Activated CD4-positive, alpha-beta T cell treated with anti-CD3 and anti-CD28 coated beads for 36 hours (primary cell): ENCODE measurements at regions of chr5 and their contacts with region 1.

Region 1: GRCh38 chr5:88666761-88667495 is 216.1 kb downstream of the MEF2C start:
- DNase-seq: peak; percentile 12
- ATAC-seq: peak; percentile 36
- H3K4me3 Mint-ChIP-seq: peak overlapping the region; percentile 64
- H3K27ac Mint-ChIP-seq: no peak overlapping the region
- H3K4me1 Mint-ChIP-seq: peaks cover 27% of the 10 kb centered on the region
- H3K27me3 Mint-ChIP-seq: peaks cover 74% of the 10 kb centered on the region

Region 2: DNA sequence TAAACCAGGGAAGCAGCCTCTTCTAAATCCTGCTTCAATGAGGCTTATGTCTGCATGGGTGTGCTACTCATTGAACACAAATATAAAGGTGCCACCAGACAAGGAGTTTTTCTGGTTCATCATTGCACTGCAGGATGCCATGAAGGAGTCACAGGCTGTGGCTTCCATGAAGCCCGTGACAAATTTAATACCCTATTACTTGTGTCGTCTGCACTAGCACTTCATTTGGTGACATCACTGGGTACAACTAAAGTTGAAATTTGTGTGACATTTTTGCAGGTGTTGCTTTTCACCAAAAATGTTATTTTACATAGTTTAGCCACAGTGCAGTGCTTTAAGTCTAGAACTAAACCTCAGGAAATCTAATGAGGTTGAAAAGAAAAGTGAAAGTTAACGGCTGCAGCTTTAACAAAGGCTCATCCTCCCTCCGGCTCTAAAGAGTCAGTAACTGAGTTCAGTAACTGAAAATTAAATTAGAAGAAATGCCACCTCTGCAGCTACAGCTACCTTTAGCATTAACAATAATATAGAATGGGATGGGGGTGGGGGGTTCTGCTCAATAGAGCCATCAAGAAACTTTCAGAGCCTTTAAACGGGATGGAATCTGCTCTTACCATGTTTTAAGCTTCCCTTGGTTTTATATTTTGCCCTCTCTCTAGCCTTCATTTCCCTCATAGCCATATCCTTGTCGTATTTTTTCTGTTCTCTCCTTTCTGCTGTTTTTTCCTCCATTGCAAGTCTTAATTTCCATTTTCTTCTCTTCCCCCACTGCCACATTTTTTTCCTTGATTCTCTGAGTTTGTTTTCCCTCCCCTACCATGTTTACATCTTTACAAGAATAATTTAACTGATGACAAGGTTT is 164.5 kb before region 1 on chr5:
- CTCF ChIA-PET with region 1: no interaction called
- POLR2A ChIA-PET with region 1: no interaction called
- intact Hi-C with region 1: loop called in 1 of 2 experiments (anchors 5 kb)
- DNase-seq: peak; percentile 8
- ATAC-seq: peak; percentile 77
- H3K4me3 Mint-ChIP-seq: peak overlapping the region; percentile 76
- H3K27ac Mint-ChIP-seq: peak overlapping the region; percentile 87
- H3K4me1 Mint-ChIP-seq: peaks cover 10% of the 10 kb centered on the region
- H3K27me3 Mint-ChIP-seq: peaks cover 1% of the 10 kb centered on the region